AG04450 (cell line): ENCODE measurements at regions of chr14 and their contacts with region 1.

Region 1: GRCh38 chr14:74945823-74946682 is 9.3 kb downstream of the PGF start:
- DNase-seq: no peak
- H3K4me3 ChIP-seq: no peak overlapping the region
- H3K27ac ChIP-seq: no peak overlapping the region
- H3K27me3 ChIP-seq: peaks cover 2% of the 10 kb centered on the region
- CTCF ChIP-seq: peak; percentile 93

Region 2: DNA sequence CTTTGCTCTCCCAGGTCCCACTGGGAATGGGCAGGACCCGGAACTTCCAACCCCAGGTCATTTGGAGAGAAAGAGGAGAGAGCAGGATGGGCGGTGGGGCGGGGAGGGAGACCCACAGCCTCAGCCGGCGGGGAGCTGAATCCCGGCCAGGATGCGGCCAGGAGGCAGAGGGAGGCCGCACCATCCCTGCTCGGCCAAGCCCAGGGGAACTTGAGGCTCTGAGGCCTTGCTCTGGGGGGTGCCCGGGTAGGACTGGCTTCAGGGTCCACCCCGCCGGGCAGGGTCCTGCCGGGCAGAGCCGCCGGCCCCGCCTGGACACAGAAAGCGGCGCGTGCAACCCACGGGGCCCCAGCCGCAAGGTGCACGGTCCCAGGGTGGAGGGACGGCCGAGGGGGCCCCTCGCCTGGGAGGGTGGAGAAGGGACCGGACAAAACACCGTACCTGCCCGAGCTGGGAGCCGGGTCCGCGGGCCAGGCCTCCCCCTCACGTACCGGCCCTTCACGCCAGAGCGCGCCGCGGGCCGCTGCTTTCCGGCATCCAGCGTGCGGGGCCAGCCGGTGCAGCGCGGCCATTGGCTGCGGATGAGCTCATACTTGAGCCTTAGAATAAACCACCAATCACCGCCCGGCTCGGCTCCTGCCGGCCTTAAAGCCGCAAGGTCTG is 23.2 kb before region 1 on chr14 and contains the start of gene RPS6KL1:
- CTCF ChIA-PET with region 1: interaction called, 13 read pairs
- POLR2A ChIA-PET with region 1: no interaction called
- DNase-seq: peak; percentile 39
- H3K4me3 ChIP-seq: peak within 1 kb of the TSS; percentile 55
- H3K27ac ChIP-seq: no peak within 1 kb of the TSS
- H3K27me3 ChIP-seq: peaks cover 2% of the 10 kb centered on the region
- CTCF ChIP-seq: no peak
- polyA plus RNA-seq, gene RPS6KL1: 0.37 and 0.64 TPM in 2 replicates